ENCODE measurements at regions of chr1 and their contacts with region 1.

Region 1: DNA sequence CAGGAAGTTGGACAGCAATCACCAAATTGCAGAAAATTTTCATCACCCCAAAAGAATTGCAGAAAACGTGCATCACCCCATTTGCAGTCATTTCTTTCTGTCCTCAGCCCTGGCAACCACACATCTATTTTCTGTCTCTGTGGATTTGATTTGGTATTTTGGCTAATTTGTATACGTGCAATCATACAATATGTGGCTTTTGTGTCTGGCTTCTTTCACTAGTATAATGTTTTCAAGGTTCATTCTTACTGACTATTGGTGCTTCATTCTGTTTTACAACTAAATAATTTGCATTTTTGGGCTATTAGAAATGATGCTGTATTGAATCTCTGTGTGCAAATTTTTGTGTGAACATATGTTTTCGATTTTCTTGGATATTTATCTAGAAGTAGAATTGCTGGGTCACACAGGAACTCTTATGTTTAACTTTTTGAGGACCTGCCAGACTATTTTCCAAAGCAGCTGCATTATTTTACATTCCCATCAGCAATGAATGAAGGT is 24.8 kb upstream of the PRDM2 start:
- DNase-seq: peak; percentile 70
- H3K4me3 ChIP-seq: no peak overlapping the region
- H3K27ac ChIP-seq: peak overlapping the region; percentile 60
- H3K4me1 ChIP-seq: peaks cover 10% of the 10 kb centered on the region
- H3K27me3 ChIP-seq: no peaks in the 10 kb centered on the region

Region 2: GRCh38 chr1:13807213-13807612 is 132.0 kb after region 1 on chr1:
- in situ Hi-C with region 1: loop called (anchors 10 kb)
- DNase-seq: peak; percentile 37
- H3K4me3 ChIP-seq: no peak overlapping the region
- H3K27ac ChIP-seq: no peak overlapping the region
- H3K4me1 ChIP-seq: no peaks in the 10 kb centered on the region
- H3K27me3 ChIP-seq: no peaks in the 10 kb centered on the region

Region 3: GRCh38 chr1:13990939-13991338 is 315.7 kb after region 1 on chr1:
- in situ Hi-C with region 1: no loop called
- DNase-seq: no peak
- H3K4me3 ChIP-seq: no peak overlapping the region
- H3K27ac ChIP-seq: no peak overlapping the region
- H3K4me1 ChIP-seq: no peaks in the 10 kb centered on the region
- H3K27me3 ChIP-seq: no peaks in the 10 kb centered on the region

Region 4: DNA sequence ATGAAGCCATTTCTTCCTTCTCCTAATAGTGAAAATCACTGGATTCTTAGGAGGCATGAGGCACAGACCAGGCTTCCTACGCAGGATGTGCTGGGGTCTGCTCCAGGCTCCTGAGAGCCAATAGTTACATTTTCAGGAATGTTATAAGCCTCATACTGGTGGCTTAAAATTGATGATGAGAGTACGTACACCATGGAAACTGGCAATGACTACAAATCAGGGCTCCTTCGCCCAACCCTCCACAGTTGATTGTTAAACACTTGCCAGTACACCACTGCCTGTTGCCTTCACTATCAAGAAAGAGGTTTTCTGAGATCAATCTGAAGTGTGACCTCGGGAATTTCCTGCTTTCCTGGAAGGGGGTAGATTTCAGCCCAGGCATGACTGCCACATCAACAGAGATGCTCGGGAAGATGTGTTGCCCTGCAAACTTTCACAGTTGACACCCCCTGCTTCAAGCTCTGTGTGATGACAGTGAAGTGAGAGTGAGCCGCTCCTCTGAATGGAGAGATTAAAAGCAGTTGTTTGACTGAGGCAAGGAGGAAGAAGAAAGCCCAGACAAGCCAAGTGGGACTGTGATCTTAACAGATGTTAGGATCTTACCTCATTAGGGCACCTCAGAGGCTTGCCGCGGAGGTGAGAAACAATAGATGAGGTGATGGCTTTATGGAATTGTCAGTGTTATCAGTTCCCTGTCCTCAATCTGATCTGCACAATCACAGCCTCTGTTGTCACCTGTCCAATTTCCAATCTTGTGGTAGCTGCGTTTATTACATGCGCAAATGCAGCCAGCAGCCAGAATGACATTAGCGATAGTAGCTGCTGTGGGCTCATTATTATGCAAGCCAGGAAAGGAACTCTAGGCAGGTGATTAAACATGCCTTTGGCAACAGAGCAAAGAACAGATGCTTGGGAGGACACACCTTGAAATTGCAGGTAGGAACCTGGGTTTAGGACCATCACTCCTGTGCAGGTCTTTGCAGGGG is 1200.6 kb after region 1 on chr1:
- in situ Hi-C with region 1: no loop called
- DNase-seq: no peak
- H3K4me3 ChIP-seq: no peak overlapping the region
- H3K27ac ChIP-seq: no peak overlapping the region
- H3K4me1 ChIP-seq: peaks cover 9% of the 10 kb centered on the region
- H3K27me3 ChIP-seq: peaks cover 10% of the 10 kb centered on the region; the same call in 1 of the 2 replicates